ENCODE measurements at regions of chr17 and their contacts with region 1.

Region 1: GRCh38 chr17:29682054-29682453 is 59.3 kb upstream of the CORO6 start:
- DNase-seq: no peak
- H3K4me3 ChIP-seq: peak overlapping the region in 1 of 59 donors; percentile 15
- H3K27ac ChIP-seq: peak overlapping the region in 58 of 59 donors; percentile 1 to 96 (median 66)
- H3K27me3 ChIP-seq: no peaks in the 10 kb centered on the region
- CTCF ChIP-seq: peak in 8 of 56 donors; percentile 8 to 27 (median 20)

Region 2: DNA sequence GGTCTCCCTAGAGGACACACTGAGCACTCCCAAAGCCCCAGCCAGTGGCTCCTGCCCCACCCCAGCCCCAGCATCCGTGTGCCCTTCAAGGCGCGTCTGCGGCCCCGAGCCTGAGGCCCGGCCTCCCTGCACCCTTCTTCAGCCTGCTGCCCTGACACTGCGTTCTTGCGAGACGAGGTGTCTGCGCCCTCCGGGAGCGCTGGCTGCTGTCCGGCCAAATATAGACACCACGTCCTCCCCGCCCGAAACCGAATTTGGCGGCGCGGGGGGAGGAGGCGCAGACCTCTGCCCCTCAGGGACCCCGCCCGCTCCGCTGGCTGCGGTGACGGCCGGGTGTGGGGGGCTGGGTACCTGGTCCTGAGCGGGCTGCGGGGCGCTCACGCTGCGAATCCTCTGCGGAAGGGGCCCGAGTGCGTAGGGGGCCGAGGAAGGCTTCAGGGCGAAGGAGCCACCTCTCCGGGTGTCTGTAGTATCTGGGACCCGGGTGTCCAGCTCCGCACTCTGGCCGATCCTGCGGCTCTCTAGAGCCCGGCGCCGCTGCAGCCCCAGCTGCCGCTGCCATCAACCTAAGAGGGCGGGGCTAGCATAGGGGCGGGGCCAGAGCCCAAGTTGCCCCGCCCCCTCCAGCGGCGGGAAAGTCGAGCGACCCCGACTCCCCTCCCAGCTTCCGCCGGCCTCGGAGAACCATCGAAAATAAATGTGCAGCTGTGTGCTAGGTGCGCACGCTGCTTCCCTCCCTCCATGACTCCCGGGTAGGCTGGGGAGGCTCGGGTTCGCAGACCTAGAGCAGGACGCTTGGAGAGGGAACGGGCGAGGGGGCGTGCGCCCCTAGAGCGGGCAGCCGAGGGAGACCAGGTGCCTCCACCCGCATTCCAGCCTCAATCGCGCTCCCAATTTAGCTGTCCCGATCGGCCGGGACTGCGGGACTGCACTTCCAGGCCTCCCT is 59.4 kb before region 1 on chr17 and contains the start of gene CORO6:
- intact Hi-C with region 1: loop called in 1 of 2 experiments (anchors 5 kb)
- DNase-seq: peak in 5 of 10 donors; percentile 64 to 79 (median 69)
- H3K4me3 ChIP-seq: peak within 1 kb of the TSS; percentile 42 to 92 (median 80)
- H3K27ac ChIP-seq: peak within 1 kb of the TSS in 53 of 59 donors; percentile 1 to 89 (median 77)
- H3K27me3 ChIP-seq: no peaks in the 10 kb centered on the region
- CTCF ChIP-seq: peak in 3 of 56 donors; percentile 10 to 15 (median 14)
- total RNA-seq, gene CORO6: 31.5 to 153 (median 80.8) TPM

Region 3: DNA sequence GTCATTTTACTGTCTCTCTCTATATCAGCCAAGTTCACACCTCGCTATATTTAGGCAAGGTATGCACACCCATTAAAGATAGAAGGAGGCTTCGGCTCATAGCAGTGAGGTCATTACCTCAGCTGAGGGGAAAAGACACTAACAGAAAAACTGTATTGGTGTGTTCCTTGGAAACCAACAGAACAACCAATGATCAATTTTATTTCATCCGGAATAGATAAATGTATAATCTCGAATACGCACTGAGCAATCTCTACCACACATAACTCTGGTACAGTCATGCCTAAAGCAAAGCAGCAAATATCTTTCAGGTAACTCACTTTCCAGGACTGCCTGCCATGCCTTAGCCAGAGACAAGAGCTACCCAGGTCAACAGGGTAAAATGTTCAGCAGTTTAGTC is 50.6 kb after region 1 on chr17:
- intact Hi-C with region 1: no loop called
- DNase-seq: no peak
- H3K4me3 ChIP-seq: no peak overlapping the region
- H3K27ac ChIP-seq: peak overlapping the region in 7 of 59 donors; percentile 3 to 30 (median 12)
- H3K27me3 ChIP-seq: no peaks in the 10 kb centered on the region
- CTCF ChIP-seq: no peak

Region 4: GRCh38 chr17:29760761-29761696 is 79.0 kb after region 1 on chr17:
- intact Hi-C with region 1: loop called in 1 of 2 experiments (anchors 5 kb)
- DNase-seq: peak; percentile 44 to 88 (median 74)
- H3K4me3 ChIP-seq: peak overlapping the region; percentile 58 to 91 (median 83)
- H3K27ac ChIP-seq: peak overlapping the region; percentile 27 to 93 (median 85)
- H3K27me3 ChIP-seq: no peaks in the 10 kb centered on the region
- CTCF ChIP-seq: peak in 17 of 56 donors; percentile 3 to 36 (median 22)

Measured in dorsolateral prefrontal cortex (tissue), 120 donors.